GM12878 (cell line): ENCODE measurements at regions of chr2 and their contacts with region 1.

Region 1: GRCh38 chr2:135985018-135985825 is at the start of gene DARS1:
- DNase-seq: peak; percentile 79
- ATAC-seq: peak; percentile 86
- H3K4me3 ChIP-seq: peak within 1 kb of the TSS; percentile 88
- H3K27ac ChIP-seq: peak within 1 kb of the TSS; percentile 95
- H3K4me1 ChIP-seq: peaks cover 8% of the 10 kb centered on the region
- H3K27me3 ChIP-seq: no peaks in the 10 kb centered on the region
- CTCF ChIP-seq: no peak
- EP300 ChIP-seq: peak in 1 of 2 experiments; percentile 31; a peak in 2 of 4 replicates
- POLR2A ChIP-seq: peak; percentile 95
- RAD21 ChIP-seq: no peak
- polyA plus RNA-seq, gene DARS1: 102 to 134 TPM

Region 2: DNA sequence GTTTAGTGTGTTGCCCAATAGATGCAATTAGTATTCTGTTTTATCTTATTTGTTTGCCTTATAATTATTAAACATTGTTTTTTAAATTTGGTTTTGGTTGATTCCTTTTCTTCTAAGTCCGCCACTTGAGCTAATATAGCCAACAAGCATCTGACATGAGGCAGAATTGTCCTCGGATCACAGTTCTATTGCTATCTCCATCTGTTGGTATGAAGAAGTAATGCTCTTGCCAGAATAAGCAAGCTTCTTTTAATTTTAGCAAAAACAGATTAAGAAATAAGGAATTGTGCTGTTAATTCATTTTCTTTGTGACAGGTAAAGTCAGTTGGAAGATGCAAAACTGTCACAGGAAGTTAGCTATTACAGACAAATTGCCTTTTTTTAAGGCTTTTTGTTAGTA is 399.6 kb before region 1 on chr2:
- CTCF ChIA-PET with region 1: no interaction called
- POLR2A ChIA-PET with region 1: no interaction called
- RAD21 ChIA-PET with region 1: no interaction called
- SMC1A ChIA-PET with region 1: no interaction called
- in situ Hi-C with region 1: no loop called
- intact Hi-C with region 1: no loop called
- DNase-seq: no peak
- ATAC-seq: no peak
- H3K4me3 ChIP-seq: no peak overlapping the region
- H3K27ac ChIP-seq: no peak overlapping the region
- H3K4me1 ChIP-seq: no peaks in the 10 kb centered on the region
- H3K27me3 ChIP-seq: no peaks in the 10 kb centered on the region
- CTCF ChIP-seq: no peak
- EP300 ChIP-seq: no peak
- POLR2A ChIP-seq: no peak
- RAD21 ChIP-seq: no peak

Region 3: GRCh38 chr2:135882415-135882814 is 102.8 kb before region 1 on chr2:
- CTCF ChIA-PET with region 1: no interaction called
- POLR2A ChIA-PET with region 1: no interaction called
- RAD21 ChIA-PET with region 1: no interaction called
- SMC1A ChIA-PET with region 1: no interaction called
- in situ Hi-C with region 1: no loop called
- intact Hi-C with region 1: no loop called
- DNase-seq: no peak
- ATAC-seq: no peak
- H3K4me3 ChIP-seq: no peak overlapping the region
- H3K27ac ChIP-seq: no peak overlapping the region
- H3K4me1 ChIP-seq: no peaks in the 10 kb centered on the region
- H3K27me3 ChIP-seq: no peaks in the 10 kb centered on the region
- CTCF ChIP-seq: no peak
- EP300 ChIP-seq: no peak
- POLR2A ChIP-seq: no peak
- RAD21 ChIP-seq: no peak

Region 4: GRCh38 chr2:135931776-135932443 is 53.3 kb before region 1 on chr2:
- CTCF ChIA-PET with region 1: interaction called, 9 read pairs
- POLR2A ChIA-PET with region 1: interaction called, 4 read pairs
- RAD21 ChIA-PET with region 1: interaction called, 5 read pairs
- SMC1A ChIA-PET with region 1: interaction called, 42 read pairs
- in situ Hi-C with region 1: no loop called
- intact Hi-C with region 1: no loop called
- DNase-seq: no peak
- ATAC-seq: peak; percentile 95
- H3K4me3 ChIP-seq: no peak overlapping the region
- H3K27ac ChIP-seq: no peak overlapping the region
- H3K4me1 ChIP-seq: peaks cover 6% of the 10 kb centered on the region
- H3K27me3 ChIP-seq: no peaks in the 10 kb centered on the region
- CTCF ChIP-seq: no peak
- EP300 ChIP-seq: peak; percentile 45 to 53; a peak in 2 of 4 replicates
- POLR2A ChIP-seq: no peak
- RAD21 ChIP-seq: no peak

Region 5: GRCh38 chr2:135960656-135961551 is 24.3 kb before region 1 on chr2:
- CTCF ChIA-PET with region 1: interaction called, 3 read pairs
- POLR2A ChIA-PET with region 1: interaction called, 4 read pairs
- RAD21 ChIA-PET with region 1: interaction called, 5 read pairs
- SMC1A ChIA-PET with region 1: interaction called, 25 read pairs
- in situ Hi-C with region 1: no loop called
- intact Hi-C with region 1: no loop called
- DNase-seq: no peak
- ATAC-seq: peak; percentile 45; the same call in 2 of the 3 replicates
- H3K4me3 ChIP-seq: no peak overlapping the region
- H3K27ac ChIP-seq: no peak overlapping the region
- H3K4me1 ChIP-seq: peaks cover 15% of the 10 kb centered on the region
- H3K27me3 ChIP-seq: no peaks in the 10 kb centered on the region
- CTCF ChIP-seq: no peak
- EP300 ChIP-seq: no peak
- POLR2A ChIP-seq: no peak
- RAD21 ChIP-seq: no peak

Region 6: GRCh38 chr2:136013955-136014354 is 28.7 kb after region 1 on chr2:
- CTCF ChIA-PET with region 1: interaction called, 7 read pairs
- POLR2A ChIA-PET with region 1: interaction called, 8 read pairs
- RAD21 ChIA-PET with region 1: interaction called, 45 read pairs
- SMC1A ChIA-PET with region 1: interaction called, 153 read pairs
- in situ Hi-C with region 1: no loop called
- intact Hi-C with region 1: loop called (anchors 1 kb)
- DNase-seq: no peak
- ATAC-seq: no peak
- H3K4me3 ChIP-seq: no peak overlapping the region
- H3K27ac ChIP-seq: no peak overlapping the region
- H3K4me1 ChIP-seq: peaks cover 3% of the 10 kb centered on the region; the same call in 1 of the 2 replicates
- H3K27me3 ChIP-seq: no peaks in the 10 kb centered on the region
- CTCF ChIP-seq: no peak
- EP300 ChIP-seq: no peak
- POLR2A ChIP-seq: no peak
- RAD21 ChIP-seq: no peak

Region 7: DNA sequence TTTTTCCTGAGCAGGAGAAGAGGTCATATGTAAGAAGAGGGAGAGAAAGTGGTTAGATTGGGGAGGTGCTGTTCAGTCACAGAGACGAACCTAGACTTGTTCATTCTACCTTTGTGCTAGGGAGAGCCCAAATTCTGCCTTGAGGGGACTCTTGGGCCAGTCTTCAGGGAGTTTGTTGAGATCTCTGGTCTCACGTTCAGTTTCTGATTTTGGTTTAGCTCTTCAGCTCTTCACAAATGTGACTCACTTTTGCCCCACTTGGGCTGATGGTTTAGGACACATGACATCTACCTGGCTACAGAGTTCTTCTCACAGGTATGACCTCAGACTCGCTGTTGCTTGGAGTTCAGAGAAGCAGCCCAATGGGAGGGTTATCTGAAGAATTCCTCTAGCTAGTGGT is 49.4 kb after region 1 on chr2:
- CTCF ChIA-PET with region 1: no interaction called
- POLR2A ChIA-PET with region 1: interaction called, 5 read pairs
- RAD21 ChIA-PET with region 1: interaction called, 11 read pairs
- SMC1A ChIA-PET with region 1: interaction called, 29 read pairs
- in situ Hi-C with region 1: no loop called
- intact Hi-C with region 1: no loop called
- DNase-seq: no peak
- ATAC-seq: peak; percentile 78
- H3K4me3 ChIP-seq: no peak overlapping the region
- H3K27ac ChIP-seq: no peak overlapping the region
- H3K4me1 ChIP-seq: peaks cover under 1% of the 10 kb centered on the region; the same call in 1 of the 2 replicates
- H3K27me3 ChIP-seq: 0 out of 4 replicates have a peak, but pooled peaks cover 0 to 2% of the 10 kb centered on the region in 2 experiments
- CTCF ChIP-seq: no peak
- EP300 ChIP-seq: no peak
- POLR2A ChIP-seq: no peak
- RAD21 ChIP-seq: no peak

Region 8: DNA sequence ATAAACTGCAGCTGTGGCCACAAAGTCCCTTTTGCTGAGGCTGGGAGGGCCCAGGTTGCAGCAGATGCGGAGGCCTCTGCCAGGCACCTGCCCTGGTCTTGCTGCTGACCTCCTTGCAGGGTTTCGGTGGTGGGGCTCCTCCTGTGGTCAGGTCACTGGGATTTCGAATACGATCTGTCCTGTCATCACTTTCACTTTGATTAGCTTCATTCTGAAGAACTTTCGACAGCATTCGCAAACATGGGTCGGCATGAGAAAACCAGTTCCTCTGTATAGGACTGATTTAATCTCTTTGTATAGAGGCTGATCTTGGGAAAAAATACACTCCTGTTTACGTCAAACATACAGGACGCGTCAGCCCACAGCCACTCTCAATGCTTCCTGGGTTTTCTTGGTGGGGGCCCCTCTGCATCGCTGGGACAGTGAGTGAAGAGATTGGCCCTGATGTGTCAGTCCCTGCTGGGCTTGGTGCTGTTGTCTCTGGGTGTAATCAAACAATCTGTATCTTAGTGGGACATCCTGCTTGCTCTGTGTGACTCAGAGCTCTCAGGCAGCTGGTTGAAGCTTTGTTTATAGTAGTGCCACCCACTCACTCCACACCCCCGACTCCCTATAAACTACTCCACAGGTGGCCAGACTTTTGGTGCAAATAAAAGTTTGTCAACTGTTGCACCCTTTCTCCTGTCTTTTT is 342.1 kb after region 1 on chr2:
- CTCF ChIA-PET with region 1: no interaction called
- POLR2A ChIA-PET with region 1: no interaction called
- RAD21 ChIA-PET with region 1: interaction called, 3 read pairs
- SMC1A ChIA-PET with region 1: interaction called, 3 read pairs
- in situ Hi-C with region 1: no loop called
- intact Hi-C with region 1: loop called (anchors 5 kb)
- DNase-seq: peak; percentile 71
- ATAC-seq: peak; percentile 89
- H3K4me3 ChIP-seq: peak overlapping the region; percentile 37; the same call in 1 of the 2 replicates
- H3K27ac ChIP-seq: no peak overlapping the region
- H3K4me1 ChIP-seq: peaks cover 26% of the 10 kb centered on the region
- H3K27me3 ChIP-seq: 0 out of 4 replicates have a peak, but pooled peaks cover 0 to 2% of the 10 kb centered on the region in 2 experiments
- CTCF ChIP-seq: no peak
- EP300 ChIP-seq: peak; percentile 95 to 96; a peak in 3 of 4 replicates
- POLR2A ChIP-seq: no peak
- RAD21 ChIP-seq: no peak